H1 (cell line): ENCODE measurements at regions of chr10 and their contacts with region 1.

Region 1: GRCh38 chr10:97498076-97498840 is at the start of gene MMS19:
- DNase-seq: peak; percentile 92 to 100
- H3K4me3 ChIP-seq: peak within 1 kb of the TSS; percentile 83 to 92 (median 89)
- H3K27ac ChIP-seq: peak within 1 kb of the TSS; percentile 74; the same call in 1 of the 2 replicates
- H3K4me1 ChIP-seq: peaks cover 6 to 14% (median 11%) of the 10 kb centered on the region in 4 experiments; a peak in 6 of 7 replicates
- H3K27me3 ChIP-seq: peaks cover 0 to 16% (median 13%) of the 10 kb centered on the region in 4 experiments; a peak in 5 of 7 replicates
- CTCF ChIP-seq: no peak
- EP300 ChIP-seq: no peak
- POLR2A ChIP-seq: peak; percentile 55 to 79
- RAD21 ChIP-seq: no peak
- total RNA-seq, gene MMS19: 128 and 130 TPM in 2 replicates

Region 2: DNA sequence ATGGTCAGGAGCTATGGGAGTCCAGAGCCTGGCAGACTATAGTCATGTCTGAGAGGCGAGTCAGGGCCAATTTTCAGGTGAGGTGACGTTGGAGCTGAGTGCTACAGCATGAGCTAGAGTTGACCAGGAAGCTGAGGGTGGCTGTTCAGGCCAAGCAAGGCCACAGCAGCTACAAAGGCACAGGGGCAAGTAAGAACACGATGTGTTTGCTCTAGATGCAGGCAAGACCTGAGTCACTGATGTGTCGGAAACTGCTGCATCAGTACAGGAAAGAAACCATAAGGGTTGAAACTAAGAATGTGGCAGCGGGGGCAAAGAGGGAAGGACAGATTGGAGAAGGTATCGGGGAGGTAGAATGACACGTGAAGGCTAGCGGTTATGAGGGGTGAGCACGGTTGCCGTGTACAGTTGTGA is 85.4 kb before region 1 on chr10:
- CTCF ChIA-PET with region 1: no interaction called
- POLR2A ChIA-PET with region 1: no interaction called
- DNase-seq: no peak
- H3K4me3 ChIP-seq: no peak overlapping the region
- H3K27ac ChIP-seq: no peak overlapping the region
- H3K4me1 ChIP-seq: no peaks in the 10 kb centered on the region
- H3K27me3 ChIP-seq: no peaks in the 10 kb centered on the region
- CTCF ChIP-seq: no peak
- EP300 ChIP-seq: no peak
- POLR2A ChIP-seq: no peak
- RAD21 ChIP-seq: no peak

Region 3: DNA sequence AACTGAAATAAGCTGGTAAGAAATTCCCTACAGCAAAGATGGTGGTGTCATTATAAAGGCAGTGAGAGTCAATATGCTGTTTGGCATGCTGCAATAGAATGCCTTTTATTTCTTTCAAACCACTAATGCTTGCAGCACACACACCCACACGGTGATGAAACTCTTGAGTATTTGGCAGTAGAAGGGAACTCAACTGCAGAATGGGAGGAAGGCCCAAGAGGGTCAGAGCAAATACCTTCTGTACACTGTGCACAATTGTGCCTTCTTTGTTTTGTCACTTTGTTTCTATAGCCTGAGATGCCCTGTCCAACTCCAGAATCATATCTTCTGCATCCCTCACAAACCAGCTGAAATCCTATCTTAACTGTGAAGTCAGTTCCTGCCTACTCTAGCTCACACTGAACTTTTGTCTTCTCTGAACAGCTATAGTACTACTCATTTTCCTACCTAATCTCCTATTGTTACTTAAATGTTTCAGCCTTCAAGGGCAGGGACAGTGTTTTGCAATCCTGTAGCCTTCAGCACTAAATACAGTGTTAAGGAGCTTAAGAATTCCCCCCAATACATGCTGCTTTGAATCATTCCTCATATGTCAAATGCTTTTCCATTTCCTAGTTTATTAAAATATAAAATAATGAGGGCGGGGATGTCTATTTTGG is 22.2 kb before region 1 on chr10:
- CTCF ChIA-PET with region 1: interaction called, 4 read pairs
- POLR2A ChIA-PET with region 1: interaction called, 11 read pairs
- DNase-seq: no peak
- H3K4me3 ChIP-seq: no peak overlapping the region
- H3K27ac ChIP-seq: no peak overlapping the region
- H3K4me1 ChIP-seq: peaks cover 8 to 13% (median 10%) of the 10 kb centered on the region in 4 experiments; a peak in 6 of 7 replicates
- H3K27me3 ChIP-seq: no peaks in the 10 kb centered on the region
- CTCF ChIP-seq: no peak
- EP300 ChIP-seq: no peak
- POLR2A ChIP-seq: no peak
- RAD21 ChIP-seq: no peak

Region 4: GRCh38 chr10:97508342-97508741 is 10.1 kb after region 1 on chr10:
- CTCF ChIA-PET with region 1: interaction called, 7 read pairs
- POLR2A ChIA-PET with region 1: interaction called, 13 read pairs
- DNase-seq: no peak
- H3K4me3 ChIP-seq: no peak overlapping the region
- H3K27ac ChIP-seq: no peak overlapping the region
- H3K4me1 ChIP-seq: peaks cover 0 to 8% (median 3%) of the 10 kb centered on the region in 4 experiments; a peak in 5 of 7 replicates
- H3K27me3 ChIP-seq: no peaks in the 10 kb centered on the region; a peak in 1 of 7 replicates
- CTCF ChIP-seq: no peak
- EP300 ChIP-seq: no peak
- POLR2A ChIP-seq: no peak
- RAD21 ChIP-seq: no peak

Region 5: DNA sequence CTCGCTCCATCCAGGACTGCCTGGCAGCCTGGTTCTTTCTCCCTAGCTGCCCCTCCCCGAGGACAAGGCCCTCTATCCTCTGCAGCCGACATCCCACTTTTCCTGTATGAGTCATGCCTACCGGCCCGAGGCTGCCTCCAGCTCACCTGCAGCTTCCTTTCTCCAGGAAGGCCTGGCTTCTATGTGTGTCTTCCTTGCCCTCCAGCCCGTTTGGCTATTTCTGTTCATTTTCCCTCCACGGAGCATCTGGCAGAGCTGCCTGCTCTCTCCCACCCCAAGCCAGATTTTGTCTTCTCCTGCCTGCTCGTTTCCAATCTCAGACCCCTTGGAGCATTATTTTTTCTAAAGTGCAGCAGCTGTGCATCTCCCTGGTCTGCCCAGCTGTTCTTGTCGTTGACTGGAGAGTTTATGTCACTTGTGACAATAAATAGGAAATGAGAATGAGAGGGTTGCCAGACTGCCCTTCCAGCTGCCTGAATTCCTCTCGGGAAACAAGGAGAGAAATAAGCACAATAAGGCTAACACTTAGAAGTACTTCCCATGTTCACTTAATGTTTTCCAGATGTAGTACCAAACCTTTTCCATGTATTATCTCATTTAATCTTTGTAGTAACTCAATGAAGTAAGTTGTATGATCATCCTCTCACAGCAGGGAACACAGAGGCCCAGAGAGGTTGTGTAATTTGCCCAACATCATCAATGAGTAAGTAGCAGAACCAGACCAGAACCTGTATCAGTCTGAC is 20.2 kb after region 1 on chr10:
- CTCF ChIA-PET with region 1: interaction called, 6 read pairs
- POLR2A ChIA-PET with region 1: interaction called, 11 read pairs
- DNase-seq: peak in 1 of 2 experiments; percentile 51
- H3K4me3 ChIP-seq: no peak overlapping the region
- H3K27ac ChIP-seq: no peak overlapping the region
- H3K4me1 ChIP-seq: peaks cover 11 to 23% (median 19%) of the 10 kb centered on the region in 4 experiments
- H3K27me3 ChIP-seq: no peaks in the 10 kb centered on the region
- CTCF ChIP-seq: no peak
- EP300 ChIP-seq: no peak
- POLR2A ChIP-seq: no peak
- RAD21 ChIP-seq: no peak

Region 6: DNA sequence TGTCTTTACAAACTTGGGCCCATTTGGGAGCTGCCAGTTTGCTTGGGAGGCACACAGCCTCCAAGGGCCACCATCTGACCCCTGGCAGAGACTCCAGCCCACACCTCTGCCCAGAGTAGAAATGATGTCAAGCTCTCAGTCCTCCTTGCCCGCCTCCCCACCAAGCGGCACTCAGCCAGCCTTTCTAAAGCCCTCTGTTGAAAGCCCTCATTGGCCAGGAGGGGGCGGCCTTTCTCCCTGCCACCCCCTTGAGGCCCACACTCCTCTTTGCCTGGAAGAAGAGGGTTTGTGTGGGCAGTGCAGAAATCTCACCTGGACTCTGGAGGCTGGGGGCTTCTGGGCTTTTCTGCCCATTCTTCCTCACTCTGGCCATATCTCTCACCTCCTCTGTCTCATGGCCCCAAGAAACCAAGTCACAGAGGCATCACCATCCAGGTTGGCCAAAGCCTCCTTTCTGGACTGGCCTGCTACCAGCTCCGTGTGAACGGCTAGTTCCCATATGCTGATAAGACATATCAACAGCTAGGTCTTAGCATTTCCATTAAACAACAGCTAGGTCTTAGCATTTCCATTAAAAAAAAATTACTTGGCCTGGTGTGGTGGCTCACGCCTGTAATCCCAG is 36.6 kb after region 1 on chr10:
- CTCF ChIA-PET with region 1: interaction called, 24 read pairs
- POLR2A ChIA-PET with region 1: interaction called, 4 read pairs
- DNase-seq: peak in 1 of 2 experiments; percentile 79
- H3K4me3 ChIP-seq: no peak overlapping the region
- H3K27ac ChIP-seq: no peak overlapping the region
- H3K4me1 ChIP-seq: peaks cover 0 to 15% (median 8%) of the 10 kb centered on the region in 4 experiments; a peak in 6 of 7 replicates
- H3K27me3 ChIP-seq: no peaks in the 10 kb centered on the region
- CTCF ChIP-seq: peak; percentile 78 to 85 (median 84)
- EP300 ChIP-seq: no peak
- POLR2A ChIP-seq: no peak
- RAD21 ChIP-seq: peak; percentile 67 to 76

Region 7: GRCh38 chr10:97543025-97543575 is 44.8 kb after region 1 on chr10:
- CTCF ChIA-PET with region 1: interaction called, 18 read pairs
- POLR2A ChIA-PET with region 1: interaction called, 3 read pairs
- DNase-seq: no peak
- H3K4me3 ChIP-seq: no peak overlapping the region
- H3K27ac ChIP-seq: no peak overlapping the region
- H3K4me1 ChIP-seq: peaks cover 0 to 21% (median 8%) of the 10 kb centered on the region in 4 experiments; a peak in 6 of 7 replicates
- H3K27me3 ChIP-seq: no peaks in the 10 kb centered on the region
- CTCF ChIP-seq: no peak
- EP300 ChIP-seq: no peak
- POLR2A ChIP-seq: no peak
- RAD21 ChIP-seq: no peak

Region 8: DNA sequence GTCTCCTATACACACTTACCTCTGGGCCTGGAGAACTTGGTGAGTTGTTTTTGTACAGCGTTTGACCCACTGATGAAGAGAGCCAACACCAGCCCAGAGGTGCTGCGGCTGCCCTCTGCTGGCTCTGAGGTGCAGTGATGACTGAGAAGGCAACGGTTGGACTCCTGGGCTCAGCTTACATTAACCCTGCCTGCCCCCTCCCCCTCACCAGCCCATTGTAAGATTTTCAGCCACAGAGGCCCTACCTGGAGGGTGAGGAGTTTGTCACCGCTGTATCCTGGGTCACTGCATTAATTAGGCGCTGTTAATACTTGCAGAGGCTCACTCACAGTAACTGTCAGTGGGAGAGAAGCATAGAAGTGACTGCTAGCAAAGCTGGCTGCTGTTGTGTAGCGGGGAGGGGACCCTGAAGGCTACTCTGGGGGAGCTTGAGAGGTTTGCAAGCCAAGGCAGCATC is 55.3 kb after region 1 on chr10:
- CTCF ChIA-PET with region 1: interaction called, 16 read pairs
- POLR2A ChIA-PET with region 1: interaction called, 7 read pairs
- DNase-seq: peak in 1 of 2 experiments; percentile 81
- H3K4me3 ChIP-seq: peak overlapping the region in 3 of 4 experiments; percentile 30 to 32 (median 31); a peak in 6 of 8 replicates
- H3K27ac ChIP-seq: no peak overlapping the region; the same call in 1 of the 2 replicates
- H3K4me1 ChIP-seq: peaks cover 15 to 29% (median 22%) of the 10 kb centered on the region in 4 experiments
- H3K27me3 ChIP-seq: no peaks in the 10 kb centered on the region
- CTCF ChIP-seq: peak; percentile 89 to 95 (median 95)
- EP300 ChIP-seq: no peak
- POLR2A ChIP-seq: no peak
- RAD21 ChIP-seq: peak; percentile 84 to 88